Activated CD4-positive, alpha-beta T cell treated with anti-CD3 and anti-CD28 coated beads, Interleukin-2, amount 10 ng/mL, durations not matched to agents 24 days and 14 days (primary cell): ENCODE measurements at regions of chr5 and their contacts with region 1.

Region 1: GRCh38 chr5:68215208-68215897 is at the start of gene PIK3R1:
- DNase-seq: peak; percentile 97
- H3K4me3 Mint-ChIP-seq: peak within 1 kb of the TSS; percentile 89
- H3K27ac Mint-ChIP-seq: peak within 1 kb of the TSS; percentile 95
- H3K4me1 Mint-ChIP-seq: peaks cover 34% of the 10 kb centered on the region
- H3K27me3 Mint-ChIP-seq: no peaks in the 10 kb centered on the region
- total RNA-seq, gene PIK3R1: 35.2 and 38.6 TPM in 2 replicates

Region 2: GRCh38 chr5:68239487-68239886 is 24.1 kb after region 1 on chr5:
- intact Hi-C with region 1: loop called (anchors 1 kb)
- DNase-seq: peak; percentile 92
- H3K4me3 Mint-ChIP-seq: peak overlapping the region; percentile 77
- H3K27ac Mint-ChIP-seq: peak overlapping the region; percentile 86
- H3K4me1 Mint-ChIP-seq: peaks cover 56% of the 10 kb centered on the region
- H3K27me3 Mint-ChIP-seq: no peaks in the 10 kb centered on the region

Region 3: GRCh38 chr5:68272289-68272688 is 56.9 kb after region 1 on chr5:
- intact Hi-C with region 1: loop called (anchors 2 kb)
- DNase-seq: no peak
- H3K4me3 Mint-ChIP-seq: no peak overlapping the region
- H3K27ac Mint-ChIP-seq: no peak overlapping the region
- H3K4me1 Mint-ChIP-seq: peaks cover 57% of the 10 kb centered on the region
- H3K27me3 Mint-ChIP-seq: no peaks in the 10 kb centered on the region

Region 4: DNA sequence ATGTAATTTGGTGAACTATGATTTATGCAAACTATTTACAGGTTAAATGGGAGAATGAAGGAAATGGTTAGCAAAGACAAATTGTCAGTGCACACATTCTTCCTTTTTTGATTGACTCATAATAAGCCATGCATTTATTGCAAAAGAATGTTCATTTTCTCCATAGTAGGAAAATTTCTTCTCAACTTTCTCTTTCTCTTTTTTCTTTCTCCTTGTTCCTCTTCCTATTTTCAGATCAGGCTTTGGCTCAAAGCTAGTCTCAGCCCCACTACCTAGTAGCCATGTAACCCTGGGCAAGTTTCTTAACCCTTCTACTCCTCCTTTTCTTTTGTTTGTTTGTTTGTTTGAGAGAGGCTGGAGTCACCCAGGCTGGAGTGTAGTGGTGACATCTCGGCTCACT is 156.8 kb after region 1 on chr5:
- intact Hi-C with region 1: no loop called
- DNase-seq: no peak
- H3K4me3 Mint-ChIP-seq: no peak overlapping the region
- H3K27ac Mint-ChIP-seq: no peak overlapping the region
- H3K4me1 Mint-ChIP-seq: peaks cover 41% of the 10 kb centered on the region
- H3K27me3 Mint-ChIP-seq: peaks cover 6% of the 10 kb centered on the region

Region 5: DNA sequence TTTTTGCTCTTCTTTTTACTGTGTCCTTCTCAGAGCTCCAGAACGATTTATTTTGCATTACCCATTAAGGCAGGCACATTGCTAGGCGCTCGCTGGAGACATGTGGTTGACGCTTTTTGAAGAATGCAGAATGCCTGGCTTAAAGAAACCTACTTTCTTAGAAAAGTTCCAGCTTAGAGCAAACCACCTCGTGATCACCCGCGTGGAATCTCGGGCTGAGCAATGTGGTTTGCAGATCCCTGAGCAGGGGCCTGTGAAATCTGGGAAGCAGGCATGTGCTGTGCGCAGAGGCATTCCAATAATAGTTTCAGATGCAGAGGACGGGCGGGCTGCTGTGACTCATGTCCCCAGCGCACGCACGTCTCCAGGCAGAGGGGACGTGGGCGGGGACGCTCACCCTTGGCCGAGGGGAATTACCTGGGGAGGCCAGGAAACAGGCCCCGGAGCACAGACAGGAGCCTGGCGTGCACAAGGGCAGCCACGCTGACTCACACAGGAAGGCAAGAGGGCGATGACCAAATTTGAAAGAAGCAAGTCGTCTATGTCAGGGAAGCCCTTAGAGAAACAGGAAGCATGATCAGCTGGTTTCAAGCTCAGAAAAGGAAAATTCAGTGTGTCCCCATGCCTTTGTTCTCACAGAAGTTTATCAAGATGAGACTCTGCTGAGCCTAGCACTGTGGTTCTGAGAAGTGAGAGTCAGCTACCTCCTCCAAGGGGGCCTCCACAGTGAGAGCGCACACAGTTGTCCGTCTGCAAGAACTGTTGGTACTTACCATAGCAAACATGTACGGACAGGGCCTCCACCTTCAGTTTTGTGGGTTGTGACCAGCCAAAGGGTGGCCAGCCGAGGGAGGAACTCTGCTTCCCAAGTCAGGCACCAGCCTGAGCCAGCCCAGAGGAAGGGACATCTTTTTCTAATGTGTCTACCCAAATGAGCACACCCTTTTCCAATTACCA is 218.8 kb after region 1 on chr5:
- intact Hi-C with region 1: loop called (anchors 1 kb)
- DNase-seq: peak; percentile 96
- H3K4me3 Mint-ChIP-seq: peak overlapping the region; percentile 66
- H3K27ac Mint-ChIP-seq: peak overlapping the region; percentile 84
- H3K4me1 Mint-ChIP-seq: peaks cover 54% of the 10 kb centered on the region
- H3K27me3 Mint-ChIP-seq: peaks cover 37% of the 10 kb centered on the region